ENCODE measurements at regions of chr5 and their contacts with region 1.

Region 1: GRCh38 chr5:125575891-125576505 is 829.6 kb upstream of the ZNF608 start:
- DNase-seq: no peak
- H3K4me3 ChIP-seq: no peak overlapping the region
- H3K27ac ChIP-seq: no peak overlapping the region
- H3K4me1 ChIP-seq: no peaks in the 10 kb centered on the region
- H3K27me3 ChIP-seq: no peaks in the 10 kb centered on the region
- CTCF ChIP-seq: no peak
- POLR2A ChIP-seq: no peak

Region 2: DNA sequence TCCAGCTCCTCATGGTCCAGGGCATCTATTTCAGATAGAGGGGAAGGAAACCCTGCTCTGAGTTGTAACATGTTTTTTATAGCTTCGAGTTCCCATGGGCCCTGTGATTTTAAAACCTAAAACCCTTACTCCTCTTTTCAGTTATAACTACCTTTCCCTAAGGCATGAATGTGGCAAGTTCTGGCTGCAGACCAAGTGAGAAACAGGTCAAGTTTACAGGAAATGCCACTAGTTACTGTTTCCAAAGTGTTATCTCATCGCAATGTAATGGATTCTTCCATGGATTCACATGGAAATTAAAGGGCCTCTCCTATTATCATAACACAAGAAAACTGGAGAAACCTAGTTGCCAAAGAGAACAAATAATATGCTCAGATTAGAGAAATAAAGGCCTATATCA is 272.7 kb after region 1 on chr5:
- intact Hi-C with region 1: no loop called
- DNase-seq: no peak
- H3K4me3 ChIP-seq: no peak overlapping the region
- H3K27ac ChIP-seq: no peak overlapping the region
- H3K4me1 ChIP-seq: no peaks in the 10 kb centered on the region
- H3K27me3 ChIP-seq: no peaks in the 10 kb centered on the region
- CTCF ChIP-seq: no peak
- POLR2A ChIP-seq: no peak

Region 3: DNA sequence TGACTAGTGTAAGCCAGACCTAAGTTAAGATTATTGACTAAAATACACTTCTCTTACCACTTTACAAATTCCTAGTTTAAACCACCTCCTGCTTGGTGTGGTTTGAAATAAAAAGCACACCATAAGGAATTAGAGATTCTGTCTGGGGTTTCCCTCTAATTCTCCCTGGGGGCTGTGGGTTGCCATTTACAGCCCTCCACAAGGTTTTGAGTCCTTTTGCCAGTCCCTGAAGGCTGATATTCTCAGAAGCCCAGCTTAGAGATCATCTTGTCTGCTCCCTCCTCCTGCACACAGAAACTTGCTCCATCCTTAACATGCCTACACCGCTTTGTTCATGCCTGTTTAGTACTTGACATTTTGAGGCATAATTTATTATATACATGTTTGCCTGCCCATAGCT is 1193.7 kb after region 1 on chr5:
- intact Hi-C with region 1: no loop called
- DNase-seq: no peak
- H3K4me3 ChIP-seq: no peak overlapping the region
- H3K27ac ChIP-seq: no peak overlapping the region
- H3K4me1 ChIP-seq: no peaks in the 10 kb centered on the region
- H3K27me3 ChIP-seq: no peaks in the 10 kb centered on the region
- CTCF ChIP-seq: no peak
- POLR2A ChIP-seq: no peak

Region 4: DNA sequence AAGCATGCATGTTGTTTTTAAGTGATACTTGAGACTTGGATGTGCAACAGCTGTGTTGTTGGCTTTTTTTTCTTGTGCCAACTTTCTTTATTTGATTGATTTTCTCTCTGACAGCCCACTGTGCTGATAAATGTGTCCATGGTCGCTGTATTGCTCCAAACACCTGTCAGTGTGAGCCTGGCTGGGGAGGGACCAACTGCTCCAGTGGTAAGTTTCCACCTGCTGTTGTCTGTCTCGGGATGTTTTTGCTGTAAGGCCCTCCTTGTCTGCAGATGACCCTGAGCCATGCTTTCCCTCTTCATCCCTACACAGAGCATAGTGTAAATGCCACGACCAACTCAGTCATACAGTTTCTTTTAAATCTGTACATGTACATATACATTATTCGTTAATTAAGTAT is 1793.8 kb after region 1 on chr5:
- intact Hi-C with region 1: loop called (anchors 10 kb)
- DNase-seq: no peak
- H3K4me3 ChIP-seq: no peak overlapping the region
- H3K27ac ChIP-seq: no peak overlapping the region
- H3K4me1 ChIP-seq: no peaks in the 10 kb centered on the region
- H3K27me3 ChIP-seq: no peaks in the 10 kb centered on the region
- CTCF ChIP-seq: no peak
- POLR2A ChIP-seq: no peak

Measured in breast epithelium (tissue), 4 donors.